HepG2 (cell line): ENCODE measurements at regions of chr9 and their contacts with region 1.

Region 1: GRCh38 chr9:677461-678097 is 163.9 kb upstream of the DMRT1 start:
- DNase-seq: peak; percentile 54
- ATAC-seq: peak; percentile 9
- H3K4me3 ChIP-seq: peak overlapping the region; percentile 28 to 44 (median 33); a peak in 4 of 6 replicates
- H3K27ac ChIP-seq: peak overlapping the region; percentile 88
- H3K4me1 ChIP-seq: peaks cover 100% of the 10 kb centered on the region
- H3K27me3 ChIP-seq: no peaks in the 10 kb centered on the region
- CTCF ChIP-seq: no peak
- EP300 ChIP-seq: no peak
- POLR2A ChIP-seq: peak in 1 of 2 experiments; percentile 33; a peak in 2 of 4 replicates
- RAD21 ChIP-seq: no peak

Region 2: GRCh38 chr9:626596-626995 is 51.0 kb before region 1 on chr9:
- CTCF ChIA-PET with region 1: no interaction called
- POLR2A ChIA-PET with region 1: interaction called, 3 read pairs
- in situ Hi-C with region 1: no loop called
- intact Hi-C with region 1: loop called (anchors 5 kb)
- DNase-seq: no peak
- ATAC-seq: peak; percentile 49
- H3K4me3 ChIP-seq: no peak overlapping the region
- H3K27ac ChIP-seq: no peak overlapping the region
- H3K4me1 ChIP-seq: peaks cover 34% of the 10 kb centered on the region
- H3K27me3 ChIP-seq: no peaks in the 10 kb centered on the region
- CTCF ChIP-seq: no peak
- EP300 ChIP-seq: no peak
- POLR2A ChIP-seq: no peak
- RAD21 ChIP-seq: no peak

Region 3: DNA sequence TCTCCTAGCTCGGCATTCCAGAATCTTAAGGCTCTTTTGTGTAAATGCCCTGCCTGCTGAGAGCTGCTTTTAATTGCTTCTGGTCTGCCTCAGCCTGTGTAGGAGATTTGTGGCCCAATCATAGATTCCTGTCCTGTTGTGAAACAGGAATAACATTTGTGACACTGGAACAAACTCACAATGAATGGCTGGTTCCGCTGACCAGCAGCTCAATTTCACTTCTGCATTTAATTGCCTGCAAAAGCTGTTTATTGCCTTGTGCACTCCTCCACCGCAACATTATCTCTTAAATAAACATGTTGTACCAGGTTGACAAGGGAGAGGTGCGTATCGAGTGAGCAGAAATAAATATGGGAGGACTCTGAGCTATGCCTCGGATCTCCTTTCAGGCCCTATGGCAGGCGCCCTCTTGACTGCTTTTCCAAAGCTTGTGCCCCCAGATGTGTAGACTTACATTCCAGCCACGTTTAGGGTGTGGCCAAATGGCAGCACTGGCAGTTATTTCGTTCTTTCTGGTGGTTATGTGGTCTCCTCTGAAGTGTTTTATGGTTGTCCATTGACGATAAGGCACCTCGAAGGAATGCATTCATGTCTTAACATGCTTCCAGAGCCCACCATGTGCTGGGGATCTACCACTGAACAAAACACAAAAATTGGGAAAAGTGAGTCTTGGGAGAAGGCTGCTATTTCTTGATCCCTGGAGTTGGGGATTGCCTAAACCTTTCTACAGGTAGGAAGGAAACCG is 222.0 kb after region 1 on chr9:
- CTCF ChIA-PET with region 1: no interaction called
- POLR2A ChIA-PET with region 1: no interaction called
- in situ Hi-C with region 1: no loop called
- intact Hi-C with region 1: no loop called
- DNase-seq: no peak
- ATAC-seq: no peak
- H3K4me3 ChIP-seq: no peak overlapping the region
- H3K27ac ChIP-seq: no peak overlapping the region
- H3K4me1 ChIP-seq: no peaks in the 10 kb centered on the region
- H3K27me3 ChIP-seq: peaks cover 0 to 8% of the 10 kb centered on the region in 2 experiments; a peak in 3 of 5 replicates
- CTCF ChIP-seq: no peak
- EP300 ChIP-seq: no peak
- POLR2A ChIP-seq: no peak
- RAD21 ChIP-seq: no peak